ENCODE measurements at regions of chr9 and their contacts with region 1.

Region 1: GRCh38 chr9:18255158-18255629 is 218.8 kb upstream of the ADAMTSL1 start:
- DNase-seq: peak; percentile 70
- H3K4me3 ChIP-seq: no peak overlapping the region
- H3K27ac ChIP-seq: no peak overlapping the region
- H3K27me3 ChIP-seq: no peaks in the 10 kb centered on the region
- CTCF ChIP-seq: peak; percentile 92

Region 2: DNA sequence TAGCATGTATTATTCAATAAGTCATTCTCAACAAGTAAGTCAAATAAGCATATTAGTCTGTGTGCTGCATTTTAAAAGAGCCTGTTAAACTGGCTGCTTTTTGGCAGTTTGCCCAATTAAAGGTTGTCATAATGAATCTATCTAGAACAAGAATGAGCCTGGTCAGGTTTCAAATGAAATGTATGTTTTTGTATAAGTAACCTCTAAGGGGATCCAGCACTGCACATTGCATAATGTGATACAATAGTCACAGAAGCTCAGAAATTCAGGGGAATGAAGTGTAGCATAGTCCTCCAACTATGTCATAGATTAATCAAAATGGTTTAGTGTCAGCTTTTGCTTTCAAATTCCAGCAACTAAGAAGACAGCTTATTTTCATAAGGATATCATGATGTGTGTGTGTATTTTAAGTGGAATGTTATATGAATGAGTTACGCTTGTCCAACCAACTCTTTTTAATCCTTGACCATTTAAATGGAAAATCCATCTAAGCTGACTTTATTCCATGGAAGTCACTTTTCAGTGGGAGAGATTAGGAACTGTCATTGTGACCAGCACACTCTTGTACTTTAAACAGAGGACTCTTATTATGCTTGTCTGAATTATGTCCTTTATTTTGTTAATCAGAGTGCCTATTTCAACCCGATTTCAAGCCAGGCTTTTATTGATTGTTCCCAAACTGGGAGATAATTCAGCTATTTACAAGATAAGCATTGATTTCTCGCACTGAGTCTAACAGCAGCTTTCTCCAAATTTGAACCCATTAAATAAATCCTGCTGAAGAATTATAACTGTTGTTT is 65.1 kb before region 1 on chr9:
- in situ Hi-C with region 1: no loop called
- DNase-seq: no peak
- H3K4me3 ChIP-seq: no peak overlapping the region
- H3K27ac ChIP-seq: no peak overlapping the region
- H3K27me3 ChIP-seq: no peaks in the 10 kb centered on the region
- CTCF ChIP-seq: no peak

Region 3: GRCh38 chr9:18358325-18358724 is 103.1 kb after region 1 on chr9:
- in situ Hi-C with region 1: no loop called
- DNase-seq: no peak
- H3K4me3 ChIP-seq: no peak overlapping the region
- H3K27ac ChIP-seq: no peak overlapping the region
- H3K27me3 ChIP-seq: no peaks in the 10 kb centered on the region
- CTCF ChIP-seq: no peak

Region 4: DNA sequence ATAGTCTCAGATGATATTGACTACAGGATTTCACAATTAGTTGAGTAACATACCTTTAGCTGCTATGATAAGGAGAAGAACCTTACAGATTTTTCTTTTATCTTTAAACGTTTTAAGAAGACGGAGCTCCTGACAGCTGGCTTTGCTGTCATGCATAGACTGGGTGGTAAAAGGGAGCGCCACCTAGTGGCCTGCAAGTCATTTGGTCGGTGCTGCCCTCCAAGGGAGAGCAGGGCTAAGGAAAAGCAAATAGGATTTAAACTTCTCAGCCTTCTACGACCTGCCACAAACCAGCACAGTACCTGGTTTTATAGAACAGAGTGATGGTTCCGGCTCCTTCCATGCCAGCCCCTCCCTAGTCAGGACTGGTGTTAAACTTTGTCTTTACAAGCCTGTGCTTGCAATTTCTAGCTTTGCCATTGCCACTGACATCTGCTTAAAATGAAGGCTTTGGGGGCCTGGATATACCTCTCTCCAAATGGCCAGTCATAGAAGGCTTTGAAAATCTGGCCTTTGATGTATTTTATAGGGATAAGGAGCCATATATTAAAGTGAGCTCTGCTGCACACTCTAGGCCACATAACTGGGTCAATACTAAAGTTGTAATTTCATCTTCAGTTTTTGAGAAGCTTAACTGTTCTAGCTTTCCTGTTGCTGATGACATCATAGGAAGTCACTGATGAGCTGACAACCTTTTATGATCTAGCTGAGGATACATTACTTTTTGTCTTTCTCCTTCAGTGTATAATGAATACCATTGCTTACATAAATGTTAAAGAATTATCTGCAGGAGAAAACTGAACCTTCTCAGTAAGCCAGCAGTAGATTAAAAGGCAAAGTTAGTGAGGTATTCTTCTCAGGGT is 187.7 kb after region 1 on chr9:
- in situ Hi-C with region 1: loop called (anchors 25 kb)
- DNase-seq: peak; percentile 78
- H3K4me3 ChIP-seq: no peak overlapping the region
- H3K27ac ChIP-seq: no peak overlapping the region
- H3K27me3 ChIP-seq: no peaks in the 10 kb centered on the region
- CTCF ChIP-seq: peak; percentile 96

Region 5: DNA sequence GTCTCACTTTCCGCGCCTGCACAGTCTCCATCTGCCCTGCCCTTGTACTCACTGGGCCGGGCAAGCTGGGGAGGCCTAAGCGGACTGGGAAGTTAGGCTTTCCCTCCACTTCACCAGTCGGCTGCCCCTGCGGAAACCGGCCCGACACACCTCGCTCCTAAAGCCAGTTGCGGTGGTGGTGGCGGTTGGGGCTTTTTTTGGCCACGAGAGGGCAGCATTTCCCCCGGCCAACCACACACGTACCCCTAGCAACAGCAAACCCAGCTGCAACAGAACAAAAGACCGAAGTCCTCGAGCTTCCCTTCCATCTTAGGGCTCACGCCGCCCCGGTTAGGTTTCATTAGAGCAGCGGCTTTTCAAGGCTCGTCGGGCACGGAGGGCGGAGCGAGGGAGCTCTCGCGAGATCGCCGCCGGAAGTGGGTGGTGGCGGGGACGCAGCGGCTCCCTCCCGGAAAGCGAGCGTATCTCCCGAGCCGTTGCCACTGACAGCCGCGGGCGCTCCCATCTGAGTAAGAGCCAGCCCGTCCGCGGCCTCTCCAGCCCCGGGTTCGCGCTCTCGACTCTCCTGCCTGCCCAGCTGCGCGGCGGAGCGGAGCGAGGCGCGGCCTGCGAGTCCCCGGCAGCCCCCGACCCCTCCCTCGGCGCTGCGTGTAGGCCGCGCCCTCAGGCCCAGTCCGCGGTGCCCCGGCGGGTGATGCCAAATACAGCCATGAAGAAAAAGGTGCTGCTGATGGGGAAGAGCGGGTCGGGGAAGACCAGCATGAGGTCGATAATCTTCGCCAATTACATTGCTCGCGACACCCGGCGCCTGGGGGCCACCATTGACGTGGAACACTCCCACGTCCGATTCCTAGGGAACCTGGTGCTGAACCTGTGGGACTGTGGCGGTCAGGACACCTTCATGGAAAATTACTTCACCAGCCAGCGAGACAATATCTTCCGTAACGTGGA is 794.0 kb after region 1 on chr9 and contains the start of gene RRAGA:
- in situ Hi-C with region 1: loop called (anchors 25 kb)
- DNase-seq: peak; percentile 96
- H3K4me3 ChIP-seq: peak within 1 kb of the TSS; percentile 92
- H3K27ac ChIP-seq: peak within 1 kb of the TSS; percentile 73
- H3K27me3 ChIP-seq: no peaks in the 10 kb centered on the region
- CTCF ChIP-seq: peak; percentile 89

Measured in brain microvascular endothelial cell (primary cell).